Posterior vena cava (tissue), 2 donors: ENCODE measurements at regions of chr12 and their contacts with region 1.

Region 1: GRCh38 chr12:123966596-123966995 is 6.0 kb downstream of the CCDC92 start:
- DNase-seq: no peak

Region 2: GRCh38 chr12:123905319-123905925 is 61.2 kb before region 1 on chr12:
- intact Hi-C with region 1: loop called in 1 of 2 experiments (anchors 5 kb)
- DNase-seq: no peak

Region 3: DNA sequence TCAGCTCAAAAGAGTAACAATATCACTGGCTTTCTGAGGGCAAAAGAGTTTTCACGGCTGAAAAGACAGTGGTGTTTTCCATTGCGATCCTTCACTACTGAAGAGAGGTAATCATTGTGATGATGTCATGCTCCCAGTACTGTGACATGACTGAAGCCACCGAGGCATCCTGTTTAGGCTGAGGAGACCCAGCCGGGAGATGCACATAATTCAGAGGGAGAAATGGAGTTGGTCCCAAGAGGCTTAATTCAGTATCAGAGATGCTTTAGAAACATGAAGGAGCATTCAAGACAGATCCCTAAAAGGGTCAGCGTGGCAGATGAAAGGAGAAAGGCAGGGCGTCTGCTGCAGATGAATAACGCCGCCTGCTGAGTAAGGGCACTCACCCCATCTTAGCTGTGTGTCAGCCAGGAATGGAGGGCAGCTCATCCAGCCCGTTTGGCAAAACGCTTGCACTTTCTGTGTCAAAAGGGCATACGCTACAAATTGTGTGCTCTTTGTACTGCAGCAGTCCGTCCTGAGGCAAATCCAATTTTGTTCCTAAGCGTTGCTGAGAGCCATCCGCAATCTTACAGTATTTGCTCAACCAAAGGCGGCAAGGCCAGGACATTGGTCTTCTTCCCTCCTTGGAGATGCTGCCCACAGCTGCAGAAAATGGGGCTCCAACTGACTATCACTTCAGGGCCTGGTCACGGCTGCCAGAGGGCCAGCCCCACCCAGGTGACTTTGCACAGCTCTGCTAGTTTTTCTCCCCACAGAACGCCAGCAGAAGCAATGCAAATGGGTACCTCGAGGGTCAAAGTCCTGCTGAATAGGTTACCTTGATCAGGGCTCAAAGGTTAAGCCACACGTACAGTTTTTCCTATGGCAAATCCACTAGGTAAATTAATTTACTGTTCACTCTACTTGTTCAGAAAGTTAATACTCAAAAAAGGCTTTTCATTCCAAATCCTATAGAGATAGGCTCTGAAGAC is 17.5 kb before region 1 on chr12:
- intact Hi-C with region 1: no loop called
- DNase-seq: no peak